ENCODE measurements at regions of chr3 and their contacts with region 1.

Region 1: DNA sequence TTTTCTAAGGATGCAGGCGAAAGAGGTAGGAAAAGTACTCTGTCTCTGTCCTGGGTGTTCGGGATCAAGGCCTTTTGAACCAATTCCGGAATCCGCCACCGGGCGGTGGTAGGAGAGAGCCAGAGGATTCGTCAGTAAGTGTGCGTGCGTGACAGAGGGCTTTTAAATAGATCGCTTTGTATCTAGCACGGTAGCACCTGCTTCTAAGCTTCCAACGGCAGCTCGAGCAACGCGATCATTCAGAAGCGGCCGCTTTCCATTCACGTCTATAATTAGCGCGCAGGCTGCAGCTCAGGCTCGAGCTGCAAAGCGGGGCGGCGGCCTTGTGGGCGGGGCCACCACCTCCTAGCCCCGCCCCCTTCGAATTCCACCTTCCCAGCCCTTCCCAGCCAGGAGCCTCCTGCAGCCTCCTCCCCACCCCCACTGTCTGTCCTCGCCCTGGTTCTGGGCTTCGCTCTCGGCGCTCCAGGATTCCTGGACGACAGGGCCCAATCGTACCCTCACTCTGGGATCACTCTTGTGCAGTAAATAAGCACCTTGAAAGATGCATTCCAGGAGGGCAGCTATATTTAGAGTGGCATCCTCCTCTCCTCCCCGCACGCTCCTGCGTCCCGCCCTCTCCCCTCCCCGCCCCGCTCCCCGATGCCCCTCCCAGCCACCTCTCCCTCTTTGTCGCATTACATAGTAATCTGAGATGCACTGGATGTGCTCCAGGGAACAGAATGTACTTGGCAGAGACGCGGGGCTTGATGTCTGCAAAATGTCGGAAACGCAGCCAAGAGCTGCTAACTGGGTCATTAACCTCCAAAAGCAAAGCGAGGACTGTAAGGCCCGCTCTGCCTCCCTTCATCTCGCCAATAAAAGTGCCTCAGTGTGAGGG is 224.1 kb upstream of the TPRG1 start:
- DNase-seq: peak; percentile 92
- ATAC-seq: peak; percentile 89

Region 2: DNA sequence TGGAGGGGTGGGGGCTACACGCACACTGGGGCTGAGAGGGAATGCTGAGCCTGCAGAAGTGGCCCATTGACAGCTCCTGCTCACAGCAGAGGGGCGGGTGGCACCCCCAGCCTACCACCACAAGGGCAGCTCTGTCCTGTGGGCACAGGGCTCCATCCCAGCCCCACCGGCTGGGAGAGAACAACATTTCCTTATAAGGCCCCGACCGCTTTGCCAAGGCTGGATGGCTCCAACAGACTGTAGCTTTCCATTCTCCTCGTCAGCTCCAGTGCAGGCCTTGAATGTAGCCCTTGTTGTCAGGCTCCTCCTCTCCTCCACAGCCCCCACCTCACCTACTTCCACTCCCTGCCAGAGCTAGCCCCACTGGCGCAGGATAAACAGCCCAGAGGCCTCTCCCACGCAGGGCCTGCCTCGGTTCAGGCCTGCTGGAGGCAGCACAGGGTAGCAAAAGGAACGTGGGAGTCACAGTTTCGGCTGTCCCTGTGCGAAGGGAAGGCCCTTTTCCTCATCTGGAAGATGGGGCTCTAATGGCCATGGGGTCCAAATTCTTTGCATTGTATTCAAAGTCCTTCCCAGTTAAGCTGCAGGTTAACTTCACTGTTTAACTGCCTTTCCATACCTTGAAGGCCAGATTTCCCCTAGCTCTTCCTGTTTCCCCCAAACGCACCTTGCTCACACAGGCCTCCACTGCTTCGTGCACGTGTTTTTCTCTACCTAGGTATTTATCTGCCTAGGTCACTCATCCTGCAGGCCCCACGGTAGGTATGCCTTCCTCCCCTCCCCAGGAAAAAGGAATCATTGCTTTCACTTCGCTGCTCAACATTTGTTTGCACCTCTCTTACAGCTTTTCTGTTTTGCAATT is 895.2 kb before region 1 on chr3:
- intact Hi-C with region 1: loop called (anchors 5 kb)
- DNase-seq: peak; percentile 90
- ATAC-seq: peak; percentile 98

Region 3: DNA sequence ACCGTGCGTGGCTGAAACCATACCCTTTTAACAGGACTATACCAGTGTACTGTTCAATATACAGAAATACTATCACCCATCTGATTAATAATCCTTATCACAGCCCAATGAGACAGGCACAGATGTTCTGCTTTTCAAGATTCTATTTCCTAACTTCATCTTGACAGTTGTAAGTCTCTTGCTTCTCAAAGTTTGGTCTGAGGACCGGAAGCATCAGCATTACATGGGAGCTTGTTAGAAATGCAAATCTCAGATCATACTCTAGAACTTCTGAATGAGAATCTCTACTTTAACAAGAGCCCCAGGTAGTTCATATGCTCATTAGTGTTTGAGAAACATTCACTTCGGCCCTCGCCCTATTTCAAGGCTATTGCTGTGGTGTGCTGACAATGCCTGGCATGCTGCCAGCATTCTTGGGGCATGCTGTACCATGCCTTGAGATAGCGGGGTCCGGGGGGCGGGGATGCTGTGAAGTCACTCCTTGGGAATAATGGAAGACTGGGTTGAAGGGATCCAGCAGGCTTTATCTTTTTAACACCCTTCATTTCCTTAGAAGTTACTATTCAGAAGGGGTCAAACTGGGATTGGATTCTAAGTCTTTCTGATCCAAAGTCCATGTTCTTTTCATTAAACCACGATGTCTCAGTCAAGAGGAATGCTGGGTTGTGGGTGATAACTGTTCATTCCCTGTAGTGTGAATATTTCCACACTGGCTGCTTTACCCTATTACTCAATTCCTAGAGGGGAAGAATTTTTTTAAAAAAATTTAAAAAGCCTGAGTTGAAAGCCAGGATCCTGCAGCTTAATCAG is 599.0 kb before region 1 on chr3:
- intact Hi-C with region 1: loop called (anchors 1 kb)
- DNase-seq: peak; percentile 90
- ATAC-seq: peak; percentile 87

Region 4: GRCh38 chr3:188507244-188507720 is 440.4 kb before region 1 on chr3:
- intact Hi-C with region 1: loop called (anchors 10 kb)
- DNase-seq: no peak
- ATAC-seq: peak; percentile 81

Region 5: GRCh38 chr3:188683032-188683521 is 264.6 kb before region 1 on chr3:
- intact Hi-C with region 1: loop called (anchors 10 kb)
- DNase-seq: no peak
- ATAC-seq: peak; percentile 67

Region 6: GRCh38 chr3:189123595-189124387 is 176.2 kb after region 1 on chr3:
- intact Hi-C with region 1: no loop called
- DNase-seq: no peak
- ATAC-seq: peak; percentile 90

Measured in Right ventricle myocardium inferior (tissue), 1 donor.